ENCODE measurements at regions of chr11 and their contacts with region 1.

Region 1: DNA sequence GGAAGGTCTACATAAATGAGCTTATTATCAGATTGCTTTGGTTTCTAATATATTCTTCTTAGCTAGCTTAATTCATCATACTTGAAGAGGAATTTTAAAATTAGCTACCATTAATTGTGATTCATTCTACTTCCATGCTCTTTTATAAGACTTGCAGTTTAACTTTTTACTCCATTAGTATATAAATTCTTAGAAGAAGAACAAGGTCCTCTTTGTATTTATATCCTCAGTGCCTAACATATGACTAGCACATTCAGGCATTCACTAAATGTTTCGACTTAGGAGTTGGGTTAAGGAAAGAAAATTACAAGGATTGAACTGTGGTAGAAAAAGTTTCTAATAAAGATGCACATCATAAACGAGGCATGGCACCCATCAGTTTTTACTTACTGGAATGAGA is 1135.5 kb downstream of the JRKL start:
- DNase-seq: no peak
- ATAC-seq: no peak
- H3K4me3 ChIP-seq: no peak overlapping the region
- H3K4me3 Mint-ChIP-seq: no peak overlapping the region
- H3K27ac ChIP-seq: no peak overlapping the region
- H3K27ac Mint-ChIP-seq: no peak overlapping the region
- H3K4me1 ChIP-seq: no peaks in the 10 kb centered on the region
- H3K4me1 Mint-ChIP-seq: no peaks in the 10 kb centered on the region
- H3K27me3 ChIP-seq: no peaks in the 10 kb centered on the region
- H3K27me3 Mint-ChIP-seq: no peaks in the 10 kb centered on the region

Region 2: GRCh38 chr11:97489241-97489640 is 36.0 kb before region 1 on chr11:
- CTCF ChIA-PET with region 1: no interaction called
- POLR2A ChIA-PET with region 1: no interaction called
- intact Hi-C with region 1: no loop called
- DNase-seq: no peak
- ATAC-seq: no peak
- H3K4me3 ChIP-seq: no peak overlapping the region
- H3K4me3 Mint-ChIP-seq: no peak overlapping the region
- H3K27ac ChIP-seq: no peak overlapping the region
- H3K27ac Mint-ChIP-seq: no peak overlapping the region
- H3K4me1 ChIP-seq: no peaks in the 10 kb centered on the region
- H3K4me1 Mint-ChIP-seq: no peaks in the 10 kb centered on the region
- H3K27me3 ChIP-seq: no peaks in the 10 kb centered on the region
- H3K27me3 Mint-ChIP-seq: no peaks in the 10 kb centered on the region

Region 3: GRCh38 chr11:97580456-97580855 is 55.2 kb after region 1 on chr11:
- CTCF ChIA-PET with region 1: no interaction called
- POLR2A ChIA-PET with region 1: no interaction called
- intact Hi-C with region 1: loop called in 1 of 2 experiments (anchors 10 kb)
- DNase-seq: no peak
- ATAC-seq: no peak
- H3K4me3 ChIP-seq: no peak overlapping the region
- H3K4me3 Mint-ChIP-seq: no peak overlapping the region
- H3K27ac ChIP-seq: no peak overlapping the region
- H3K27ac Mint-ChIP-seq: no peak overlapping the region
- H3K4me1 ChIP-seq: no peaks in the 10 kb centered on the region
- H3K4me1 Mint-ChIP-seq: no peaks in the 10 kb centered on the region
- H3K27me3 ChIP-seq: no peaks in the 10 kb centered on the region
- H3K27me3 Mint-ChIP-seq: no peaks in the 10 kb centered on the region

Region 4: GRCh38 chr11:97656356-97656755 is 131.1 kb after region 1 on chr11:
- CTCF ChIA-PET with region 1: no interaction called
- POLR2A ChIA-PET with region 1: no interaction called
- intact Hi-C with region 1: no loop called
- DNase-seq: no peak
- ATAC-seq: no peak
- H3K4me3 ChIP-seq: no peak overlapping the region
- H3K4me3 Mint-ChIP-seq: no peak overlapping the region
- H3K27ac ChIP-seq: no peak overlapping the region
- H3K27ac Mint-ChIP-seq: no peak overlapping the region
- H3K4me1 ChIP-seq: no peaks in the 10 kb centered on the region
- H3K4me1 Mint-ChIP-seq: no peaks in the 10 kb centered on the region
- H3K27me3 ChIP-seq: no peaks in the 10 kb centered on the region
- H3K27me3 Mint-ChIP-seq: no peaks in the 10 kb centered on the region

Measured in naive thymus-derived CD4-positive, alpha-beta T cell (primary cell).